BJ (cell line): ENCODE measurements at regions of chr3 and their contacts with region 1.

Region 1: GRCh38 chr3:137105277-137105977 is 147.6 kb downstream of the IL20RB start:
- DNase-seq: peak; percentile 8
- H3K4me3 ChIP-seq: no peak overlapping the region
- H3K27me3 ChIP-seq: peaks cover 8% of the 10 kb centered on the region; the same call in 1 of the 2 replicates
- CTCF ChIP-seq: peak; percentile 62

Region 2: GRCh38 chr3:137148917-137149316 is 43.5 kb after region 1 on chr3:
- CTCF ChIA-PET with region 1: no interaction called
- POLR2A ChIA-PET with region 1: no interaction called
- DNase-seq: no peak
- H3K4me3 ChIP-seq: no peak overlapping the region
- H3K27me3 ChIP-seq: no peaks in the 10 kb centered on the region
- CTCF ChIP-seq: no peak

Region 3: DNA sequence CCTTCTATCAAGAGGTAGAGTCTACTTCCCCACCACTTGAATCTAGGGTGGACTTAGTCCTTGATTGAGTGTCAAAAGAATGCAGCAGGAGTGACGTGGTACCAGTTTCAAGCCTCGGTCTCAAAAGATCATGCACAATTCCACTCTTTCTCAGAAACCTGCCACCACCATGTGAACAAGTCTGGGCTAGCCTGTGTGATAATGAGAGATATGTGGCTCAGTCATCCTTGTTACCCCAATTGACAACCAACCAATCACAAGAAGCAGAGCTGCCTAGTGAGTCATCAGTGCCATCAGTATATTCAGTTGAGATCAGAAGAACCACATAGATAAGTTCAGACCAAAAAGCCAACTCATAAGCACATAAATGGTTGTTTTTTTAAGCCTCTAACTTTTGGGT is 226.9 kb after region 1 on chr3:
- CTCF ChIA-PET with region 1: no interaction called
- POLR2A ChIA-PET with region 1: no interaction called
- DNase-seq: no peak
- H3K4me3 ChIP-seq: no peak overlapping the region
- H3K27me3 ChIP-seq: no peaks in the 10 kb centered on the region
- CTCF ChIP-seq: no peak

Region 4: DNA sequence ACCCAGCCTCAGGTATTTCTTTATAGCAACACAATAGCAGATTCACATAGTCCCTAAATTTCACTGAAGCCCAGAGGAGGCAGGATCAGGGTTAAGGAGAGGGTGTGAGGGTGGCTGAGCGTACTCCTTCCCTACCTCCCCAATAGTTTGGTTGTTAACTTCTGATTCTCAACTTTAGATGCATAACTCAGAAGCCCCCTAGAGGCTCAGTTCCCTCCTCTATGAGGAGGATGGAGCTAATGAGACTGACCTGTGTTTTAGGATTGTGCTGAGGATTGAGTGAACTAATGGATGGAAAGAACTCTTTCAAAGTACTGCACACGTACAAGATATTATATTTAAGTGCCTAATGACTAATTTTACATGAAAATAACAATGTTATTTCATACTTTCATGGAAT is 409.4 kb after region 1 on chr3:
- CTCF ChIA-PET with region 1: no interaction called
- POLR2A ChIA-PET with region 1: no interaction called
- DNase-seq: no peak
- H3K4me3 ChIP-seq: no peak overlapping the region
- H3K27me3 ChIP-seq: no peaks in the 10 kb centered on the region
- CTCF ChIP-seq: no peak

Region 5: GRCh38 chr3:137946345-137946973 is 841.0 kb after region 1 on chr3:
- CTCF ChIA-PET with region 1: interaction called, 21 read pairs
- POLR2A ChIA-PET with region 1: no interaction called
- DNase-seq: no peak
- H3K4me3 ChIP-seq: no peak overlapping the region
- H3K27me3 ChIP-seq: no peaks in the 10 kb centered on the region
- CTCF ChIP-seq: peak; percentile 66

Region 6: GRCh38 chr3:137970914-137971831 is 865.7 kb after region 1 on chr3:
- CTCF ChIA-PET with region 1: interaction called, 17 read pairs
- POLR2A ChIA-PET with region 1: no interaction called
- DNase-seq: no peak
- H3K4me3 ChIP-seq: no peak overlapping the region
- H3K27me3 ChIP-seq: 0 out of 2 replicates have a peak, but pooled peaks cover 2% of the 10 kb centered on the region
- CTCF ChIP-seq: peak; percentile 98

Region 7: GRCh38 chr3:138051946-138052802 is 946.7 kb after region 1 on chr3:
- CTCF ChIA-PET with region 1: interaction called, 14 read pairs
- POLR2A ChIA-PET with region 1: no interaction called
- DNase-seq: no peak
- H3K4me3 ChIP-seq: no peak overlapping the region
- H3K27me3 ChIP-seq: no peaks in the 10 kb centered on the region
- CTCF ChIP-seq: peak; percentile 72